Vagina (tissue), 2 donors: ENCODE measurements at regions of chr11 and their contacts with region 1.

Region 1: GRCh38 chr11:8011981-8012444 is 24.9 kb downstream of the EIF3F start:
- DNase-seq: peak in 1 of 2 donors; percentile 69
- H3K4me3 ChIP-seq: no peak overlapping the region
- H3K27ac ChIP-seq: no peak overlapping the region
- H3K4me1 ChIP-seq: no peaks in the 10 kb centered on the region
- H3K27me3 ChIP-seq: no peaks in the 10 kb centered on the region
- CTCF ChIP-seq: no peak
- POLR2A ChIP-seq: no peak

Region 2: DNA sequence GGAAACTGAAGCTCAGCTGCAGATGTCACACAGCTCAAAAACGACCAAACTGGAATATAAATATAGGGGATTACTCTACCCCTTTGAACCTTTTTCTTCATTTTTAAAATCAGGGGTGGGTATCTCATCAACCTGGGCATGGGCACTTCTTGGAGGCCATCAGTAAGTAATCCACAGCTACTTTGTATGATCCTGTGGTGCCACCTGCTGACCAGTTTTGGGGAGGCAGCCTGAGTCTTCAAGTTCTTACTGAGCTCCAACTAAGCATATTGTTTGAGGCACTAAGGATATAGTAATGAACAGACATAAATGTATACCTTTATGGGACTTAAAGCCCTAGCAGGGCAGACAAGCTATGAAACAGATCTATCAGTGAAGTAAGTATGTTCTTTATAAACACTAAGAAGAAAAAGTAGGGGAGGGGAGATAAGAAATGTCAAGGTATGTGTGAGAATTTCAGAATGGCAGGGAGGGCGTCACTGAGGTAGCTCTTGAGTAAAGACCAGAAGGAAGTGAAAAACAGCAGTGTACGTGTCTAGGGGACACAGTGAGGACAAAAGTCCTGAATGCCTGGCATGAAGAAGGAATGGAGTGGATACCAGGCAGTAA is 87.4 kb after region 1 on chr11:
- intact Hi-C with region 1: loop called (anchors 5 kb)
- DNase-seq: peak in 1 of 2 donors; percentile 86
- H3K4me3 ChIP-seq: no peak overlapping the region
- H3K27ac ChIP-seq: no peak overlapping the region
- H3K4me1 ChIP-seq: peaks cover 13% of the 10 kb centered on the region
- H3K27me3 ChIP-seq: no peaks in the 10 kb centered on the region
- CTCF ChIP-seq: peak; percentile 47 to 77 (median 49)
- POLR2A ChIP-seq: no peak